ENCODE measurements at regions of chr15 and their contacts with region 1.

Region 1: DNA sequence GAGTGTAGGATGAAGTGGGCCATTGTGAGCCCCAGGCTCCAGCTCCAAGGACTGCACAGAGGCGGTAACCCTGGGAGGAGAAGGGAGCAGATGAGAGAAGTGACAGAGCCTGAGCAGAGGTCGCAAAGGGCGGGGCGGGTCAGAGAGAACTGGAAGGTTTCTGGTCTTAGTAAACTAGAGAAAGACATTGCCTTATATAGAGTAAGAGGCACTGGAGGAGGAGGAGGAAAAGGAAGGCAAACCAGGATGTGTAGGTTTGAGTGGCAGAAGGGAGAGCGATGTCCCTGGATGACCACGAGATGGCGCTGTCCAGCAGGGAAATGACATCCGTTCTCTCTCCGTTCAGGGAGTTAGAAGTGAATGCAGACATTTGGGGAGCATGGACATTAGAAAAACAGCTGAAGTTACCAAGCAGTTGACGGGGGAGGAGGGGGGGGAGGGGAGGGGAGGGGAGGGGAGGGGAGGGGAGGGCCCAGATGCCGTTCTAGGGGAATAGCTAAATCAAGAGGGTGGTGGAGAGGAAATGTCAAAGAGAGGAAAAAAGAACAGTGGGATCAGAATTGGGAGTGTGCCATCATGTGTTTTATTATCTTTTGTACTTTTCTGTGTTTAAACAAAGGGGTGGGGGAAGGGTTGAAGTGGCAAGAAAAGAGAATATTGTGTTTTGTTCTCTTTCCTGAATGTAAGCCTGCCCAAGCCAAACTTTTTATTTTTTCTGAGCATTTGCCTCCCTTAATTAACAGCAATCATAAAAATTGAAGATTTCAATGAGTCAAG is 48.8 kb downstream of the STARD5 start:
- DNase-seq: peak; percentile 71 to 84 (median 74)
- H3K4me3 ChIP-seq: no peak overlapping the region
- H3K4me3 Mint-ChIP-seq: peak overlapping the region in 4 of 7 donors; percentile 40 to 65 (median 50)
- H3K27ac ChIP-seq: no peak overlapping the region
- H3K27ac Mint-ChIP-seq: peak overlapping the region in 7 of 8 donors; percentile 1 to 91 (median 77)
- H3K4me1 ChIP-seq: peaks cover 21% of the 10 kb centered on the region
- H3K4me1 Mint-ChIP-seq: peaks cover 20 to 26% (median 26%) of the 10 kb centered on the region in 3 donors
- H3K27me3 ChIP-seq: no peaks in the 10 kb centered on the region
- H3K27me3 Mint-ChIP-seq: peaks cover 0 to 1% of the 10 kb centered on the region in 2 donors

Region 2: GRCh38 chr15:81286621-81287121 is 11.6 kb after region 1 on chr15:
- CTCF ChIA-PET with region 1: interaction called, 26 read pairs
- POLR2A ChIA-PET with region 1: no interaction called
- DNase-seq: peak in 2 of 5 donors; percentile 48 to 74
- H3K4me3 ChIP-seq: peak overlapping the region; percentile 21
- H3K4me3 Mint-ChIP-seq: peak overlapping the region; percentile 4 to 78 (median 73)
- H3K27ac ChIP-seq: no peak overlapping the region
- H3K27ac Mint-ChIP-seq: peak overlapping the region; percentile 89 to 98 (median 96)
- H3K4me1 ChIP-seq: peaks cover 75% of the 10 kb centered on the region
- H3K4me1 Mint-ChIP-seq: peaks cover 67 to 78% (median 75%) of the 10 kb centered on the region in 3 donors
- H3K27me3 ChIP-seq: no peaks in the 10 kb centered on the region
- H3K27me3 Mint-ChIP-seq: no peaks in the 10 kb centered on the region

Region 3: GRCh38 chr15:81301815-81302399 is 26.8 kb after region 1 on chr15:
- CTCF ChIA-PET with region 1: interaction called, 31 read pairs
- POLR2A ChIA-PET with region 1: interaction called, 4 read pairs
- DNase-seq: no peak
- H3K4me3 ChIP-seq: peak overlapping the region; percentile 85
- H3K4me3 Mint-ChIP-seq: peak overlapping the region; percentile 96 to 100 (median 99)
- H3K27ac ChIP-seq: no peak overlapping the region
- H3K27ac Mint-ChIP-seq: peak overlapping the region; percentile 90 to 100 (median 97)
- H3K4me1 ChIP-seq: peaks cover 64% of the 10 kb centered on the region
- H3K4me1 Mint-ChIP-seq: peaks cover 65 to 66% (median 66%) of the 10 kb centered on the region in 3 donors
- H3K27me3 ChIP-seq: no peaks in the 10 kb centered on the region
- H3K27me3 Mint-ChIP-seq: no peaks in the 10 kb centered on the region

Region 4: DNA sequence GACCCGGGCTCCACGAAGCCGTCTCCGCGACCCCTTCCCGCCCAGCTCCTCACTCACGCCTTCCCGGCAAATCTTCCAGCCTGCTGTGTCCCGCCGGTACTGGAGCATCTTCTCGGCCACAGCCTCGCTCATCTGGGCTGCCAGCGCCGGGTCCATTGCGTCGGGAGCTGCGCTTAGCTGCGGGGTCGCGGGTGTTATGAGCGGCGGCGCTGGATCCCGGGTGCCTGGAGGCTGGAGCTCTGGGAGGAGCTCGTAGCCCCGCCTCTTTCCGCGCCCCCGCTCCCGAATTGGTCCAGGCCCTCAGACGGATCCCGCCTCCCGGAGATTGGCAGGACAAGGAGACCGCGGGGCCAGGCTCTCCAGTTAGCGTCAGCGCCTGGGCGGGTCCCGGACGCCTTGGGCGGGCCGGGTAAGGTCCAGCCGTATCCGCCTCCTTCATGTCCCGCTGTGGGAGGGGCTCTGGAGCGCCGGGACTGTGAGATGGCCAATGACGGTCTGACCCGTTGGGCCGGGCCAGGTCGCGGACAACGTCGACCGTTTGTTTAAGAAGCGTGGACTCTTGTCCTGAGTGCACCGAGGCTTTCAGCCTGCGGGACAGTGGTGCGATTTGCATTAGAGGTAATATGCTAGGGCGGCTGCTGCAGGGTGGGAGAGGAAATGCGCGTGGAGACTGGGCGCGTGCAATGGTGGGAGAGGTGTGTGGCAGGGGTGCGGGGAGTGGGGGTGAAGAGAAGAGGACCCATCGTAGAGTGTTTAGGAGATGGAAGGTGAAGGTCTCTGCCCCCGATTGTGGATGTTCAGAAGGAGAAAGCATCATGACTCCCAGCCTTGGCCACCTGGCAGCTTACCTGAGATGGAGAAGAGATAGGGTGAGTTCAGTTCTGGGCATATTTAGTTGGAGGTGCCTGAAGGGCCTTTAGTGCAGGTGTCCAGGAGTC is 49.1 kb after region 1 on chr15 and contains the start of gene STARD5:
- CTCF ChIA-PET with region 1: interaction called, 20 read pairs
- POLR2A ChIA-PET with region 1: no interaction called
- DNase-seq: peak; percentile 92 to 96 (median 94)
- H3K4me3 ChIP-seq: peak within 1 kb of the TSS; percentile 86
- H3K4me3 Mint-ChIP-seq: peak within 1 kb of the TSS; percentile 85 to 100 (median 95)
- H3K27ac ChIP-seq: peak within 1 kb of the TSS; percentile 62
- H3K27ac Mint-ChIP-seq: peak within 1 kb of the TSS; percentile 41 to 98 (median 92)
- H3K4me1 ChIP-seq: peaks cover 20% of the 10 kb centered on the region
- H3K4me1 Mint-ChIP-seq: peaks cover 23 to 42% (median 26%) of the 10 kb centered on the region in 3 donors
- H3K27me3 ChIP-seq: no peaks in the 10 kb centered on the region
- H3K27me3 Mint-ChIP-seq: no peaks in the 10 kb centered on the region
- total RNA-seq, gene STARD5: 4.4 to 5.8 TPM

Region 5: DNA sequence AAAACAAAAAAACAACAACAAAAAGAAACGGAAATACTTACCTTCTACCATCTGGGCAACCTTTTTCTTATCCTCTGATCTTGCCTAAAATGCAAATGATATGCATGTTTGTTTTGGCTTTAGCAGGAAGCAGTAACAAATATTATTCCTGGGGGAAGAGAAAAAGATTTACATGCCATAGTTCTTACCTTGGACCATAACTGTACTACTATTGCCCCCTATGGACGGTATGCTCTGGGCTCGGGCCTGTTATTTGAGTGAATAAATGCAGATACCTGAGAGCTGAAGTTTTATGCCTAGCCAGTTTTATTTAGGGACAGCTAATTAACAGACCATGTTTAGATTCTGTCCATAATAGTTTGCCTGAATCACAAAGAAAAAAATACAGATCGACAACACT is 61.4 kb after region 1 on chr15:
- CTCF ChIA-PET with region 1: interaction called, 46 read pairs
- POLR2A ChIA-PET with region 1: no interaction called
- DNase-seq: peak; percentile 13 to 59 (median 31)
- H3K4me3 ChIP-seq: no peak overlapping the region
- H3K4me3 Mint-ChIP-seq: no peak overlapping the region
- H3K27ac ChIP-seq: no peak overlapping the region
- H3K27ac Mint-ChIP-seq: peak overlapping the region in 3 of 8 donors; percentile 13 to 66 (median 60)
- H3K4me1 ChIP-seq: peaks cover 2% of the 10 kb centered on the region
- H3K4me1 Mint-ChIP-seq: peaks cover 0 to 5% (median 5%) of the 10 kb centered on the region in 3 donors
- H3K27me3 ChIP-seq: no peaks in the 10 kb centered on the region
- H3K27me3 Mint-ChIP-seq: no peaks in the 10 kb centered on the region

Region 6: DNA sequence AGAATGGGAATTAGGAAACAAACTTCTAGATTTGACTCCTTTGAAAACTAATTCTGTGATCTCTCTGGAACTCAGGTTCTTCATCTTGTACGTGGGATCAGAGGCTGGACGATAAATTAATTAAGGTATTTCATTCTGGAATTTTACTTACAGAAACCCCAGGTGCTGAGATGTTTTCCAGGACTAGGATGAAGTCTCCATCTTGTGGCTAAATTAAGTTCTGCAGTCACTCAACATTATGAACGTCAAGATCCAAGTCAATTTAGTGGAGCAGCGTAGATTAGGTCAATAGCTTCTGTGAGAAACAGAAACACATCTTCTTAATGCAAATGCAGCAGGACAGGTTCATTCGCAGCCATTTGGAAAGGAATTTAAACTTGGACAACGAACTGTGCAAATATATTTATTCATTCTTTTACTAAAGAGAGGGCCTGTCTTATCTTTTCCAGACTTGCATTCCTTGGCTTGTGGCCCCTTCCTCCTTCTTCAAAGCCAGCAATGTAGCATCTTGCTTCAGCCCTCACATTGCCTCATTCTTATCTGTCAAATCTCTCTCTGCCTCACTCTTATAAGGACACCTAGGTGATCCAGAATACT is 125.6 kb after region 1 on chr15:
- CTCF ChIA-PET with region 1: interaction called, 67 read pairs
- POLR2A ChIA-PET with region 1: no interaction called
- DNase-seq: peak in 2 of 5 donors; percentile 20 to 44
- H3K4me3 ChIP-seq: no peak overlapping the region
- H3K4me3 Mint-ChIP-seq: no peak overlapping the region
- H3K27ac ChIP-seq: no peak overlapping the region
- H3K27ac Mint-ChIP-seq: peak overlapping the region in 1 of 8 donors; percentile 54
- H3K4me1 ChIP-seq: no peaks in the 10 kb centered on the region
- H3K4me1 Mint-ChIP-seq: peaks cover 0 to 5% (median 0%) of the 10 kb centered on the region in 3 donors
- H3K27me3 ChIP-seq: no peaks in the 10 kb centered on the region
- H3K27me3 Mint-ChIP-seq: peaks cover 0 to 7% of the 10 kb centered on the region in 2 donors